GM12878 (cell line): ENCODE measurements at regions of chr1 and their contacts with region 1.

Region 1: DNA sequence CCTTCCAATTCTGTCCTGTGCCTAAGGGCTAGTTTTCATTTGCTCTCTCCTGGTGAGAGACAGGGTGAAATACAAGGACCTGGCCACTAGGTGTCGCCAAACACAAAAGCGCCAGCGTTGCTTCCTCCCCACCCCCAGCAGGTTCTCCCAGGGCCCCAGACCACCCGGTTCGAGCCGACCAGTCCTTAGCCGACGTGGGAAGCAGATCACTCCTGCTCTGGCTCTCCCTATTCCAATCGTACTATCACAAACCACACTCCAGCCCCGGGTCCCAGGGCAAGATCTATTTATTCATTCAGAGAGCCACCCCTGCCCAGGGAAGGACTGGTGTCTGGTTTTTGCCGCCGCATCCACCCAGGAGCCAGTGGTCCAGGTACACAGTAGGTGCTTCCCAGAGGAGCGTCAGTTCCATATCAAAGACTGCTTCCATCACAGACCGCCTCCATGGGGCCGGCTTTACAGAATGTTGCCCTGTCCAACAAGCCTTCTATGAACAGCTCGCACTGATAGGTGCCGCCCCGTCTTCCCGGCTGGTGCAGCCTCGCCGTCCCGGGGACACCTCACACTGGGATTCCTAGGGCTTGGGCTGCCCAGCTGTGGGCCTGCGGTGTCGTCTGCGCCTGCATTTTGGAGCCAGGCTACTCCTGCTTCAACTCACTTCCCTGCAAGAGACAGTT is 35.0 kb downstream of the CTNNBIP1 start:
- DNase-seq: peak; percentile 20
- ATAC-seq: peak; percentile 97
- H3K4me3 ChIP-seq: no peak overlapping the region
- H3K27ac ChIP-seq: no peak overlapping the region
- H3K4me1 ChIP-seq: 0 out of 2 replicates have a peak, but pooled peaks cover 4% of the 10 kb centered on the region
- H3K27me3 ChIP-seq: no peaks in the 10 kb centered on the region
- CTCF ChIP-seq: peak; percentile 92 to 98 (median 94); a peak in 5 of 6 replicates
- EP300 ChIP-seq: no peak
- POLR2A ChIP-seq: no peak
- RAD21 ChIP-seq: peak; percentile 95

Region 2: GRCh38 chr1:9910425-9911178 is 35.5 kb after region 1 on chr1:
- CTCF ChIA-PET with region 1: interaction called, 15 read pairs
- POLR2A ChIA-PET with region 1: no interaction called
- RAD21 ChIA-PET with region 1: interaction called, 4 read pairs
- SMC1A ChIA-PET with region 1: interaction called, 3 read pairs
- in situ Hi-C with region 1: no loop called
- intact Hi-C with region 1: no loop called
- DNase-seq: peak; percentile 93
- ATAC-seq: peak; percentile 98
- H3K4me3 ChIP-seq: peak overlapping the region; percentile 79
- H3K27ac ChIP-seq: peak overlapping the region; percentile 85
- H3K4me1 ChIP-seq: peaks cover 8% of the 10 kb centered on the region
- H3K27me3 ChIP-seq: no peaks in the 10 kb centered on the region
- CTCF ChIP-seq: no peak
- EP300 ChIP-seq: no peak
- POLR2A ChIP-seq: peak; percentile 76
- RAD21 ChIP-seq: no peak

Region 3: GRCh38 chr1:9942939-9943788 is 68.1 kb after region 1 on chr1 and contains the starts of genes LZIC and NMNAT1:
- CTCF ChIA-PET with region 1: interaction called, 43 read pairs
- POLR2A ChIA-PET with region 1: interaction called, 6 read pairs
- RAD21 ChIA-PET with region 1: interaction called, 13 read pairs
- SMC1A ChIA-PET with region 1: interaction called, 14 read pairs
- in situ Hi-C with region 1: no loop called
- intact Hi-C with region 1: loop called (anchors 1 kb)
- DNase-seq: peak; percentile 77
- ATAC-seq: peak; percentile 97
- H3K4me3 ChIP-seq: peak within 1 kb of the TSS; percentile 98
- H3K27ac ChIP-seq: peak within 1 kb of the TSS; percentile 93
- H3K4me1 ChIP-seq: peaks cover 6% of the 10 kb centered on the region; the same call in 1 of the 2 replicates
- H3K27me3 ChIP-seq: no peaks in the 10 kb centered on the region
- CTCF ChIP-seq: peak in 1 of 3 experiments; percentile 29; a peak in 1 of 6 replicates
- EP300 ChIP-seq: no peak
- POLR2A ChIP-seq: peak; percentile 95
- RAD21 ChIP-seq: peak; percentile 15; the same call in 1 of the 2 replicates
- polyA plus RNA-seq, gene LZIC: 21.8 to 24.9 TPM
- polyA plus RNA-seq, gene NMNAT1: 12.7 to 13.0 TPM

Region 4: GRCh38 chr1:10022656-10023055 is 147.6 kb after region 1 on chr1:
- CTCF ChIA-PET with region 1: interaction called, 4 read pairs
- POLR2A ChIA-PET with region 1: no interaction called
- RAD21 ChIA-PET with region 1: no interaction called
- SMC1A ChIA-PET with region 1: no interaction called
- in situ Hi-C with region 1: loop called (anchors 5 kb)
- intact Hi-C with region 1: no loop called
- DNase-seq: no peak
- ATAC-seq: no peak
- H3K4me3 ChIP-seq: no peak overlapping the region
- H3K27ac ChIP-seq: no peak overlapping the region
- H3K4me1 ChIP-seq: peaks cover 5% of the 10 kb centered on the region; the same call in 1 of the 2 replicates
- H3K27me3 ChIP-seq: no peaks in the 10 kb centered on the region
- CTCF ChIP-seq: no peak
- EP300 ChIP-seq: no peak
- POLR2A ChIP-seq: no peak
- RAD21 ChIP-seq: no peak

Region 5: DNA sequence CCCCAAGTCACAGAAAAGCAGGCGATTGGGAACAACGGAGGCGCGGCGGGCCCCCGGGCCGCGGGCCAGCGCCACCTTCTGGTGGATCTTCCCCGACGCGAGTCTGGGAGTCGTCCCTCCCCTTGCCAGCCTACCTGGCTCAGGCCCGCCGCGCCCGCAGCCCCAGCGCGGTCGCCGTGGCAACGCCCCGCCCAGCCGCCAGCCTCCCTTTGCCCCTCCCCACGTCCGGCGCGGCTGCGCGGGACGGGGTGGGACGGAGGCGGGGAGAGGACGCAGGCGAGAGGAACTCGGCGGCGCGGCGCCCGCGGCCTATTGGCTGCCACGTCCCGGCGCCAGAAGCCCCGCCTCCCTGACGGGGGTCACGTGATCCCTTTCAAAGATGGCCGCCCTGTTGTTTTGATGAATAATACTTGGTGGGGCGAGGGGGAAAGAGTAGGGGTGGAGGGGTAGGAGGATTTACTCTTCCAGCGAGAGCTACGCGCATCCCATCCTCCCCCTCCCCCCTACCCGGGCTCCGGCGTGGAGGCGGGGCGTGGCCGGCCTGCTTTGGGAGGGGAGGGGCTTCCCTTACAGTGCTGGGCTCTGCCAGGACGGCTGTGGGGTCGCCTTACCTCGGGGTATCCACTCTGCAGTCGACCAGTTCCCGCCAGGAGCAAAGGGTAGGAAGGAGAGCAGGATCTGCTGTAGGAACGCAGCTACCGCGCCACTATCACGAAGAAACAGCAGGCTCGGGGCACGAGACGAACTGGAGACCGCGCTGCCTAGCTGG is 157.7 kb after region 1 on chr1 and contains the start of gene UBE4B:
- CTCF ChIA-PET with region 1: interaction called, 4 read pairs
- POLR2A ChIA-PET with region 1: no interaction called
- RAD21 ChIA-PET with region 1: no interaction called
- SMC1A ChIA-PET with region 1: no interaction called
- in situ Hi-C with region 1: no loop called
- intact Hi-C with region 1: loop called (anchors 1 kb)
- DNase-seq: peak; percentile 83
- ATAC-seq: peak; percentile 98
- H3K4me3 ChIP-seq: peak within 1 kb of the TSS; percentile 99
- H3K27ac ChIP-seq: peak within 1 kb of the TSS; percentile 79
- H3K4me1 ChIP-seq: no peaks in the 10 kb centered on the region
- H3K27me3 ChIP-seq: no peaks in the 10 kb centered on the region
- CTCF ChIP-seq: peak; percentile 78 to 97 (median 90); a peak in 5 of 6 replicates
- EP300 ChIP-seq: peak in 1 of 2 experiments; percentile 23; a peak in 1 of 4 replicates
- POLR2A ChIP-seq: peak; percentile 62; the same call in 1 of the 2 replicates
- RAD21 ChIP-seq: peak; percentile 63
- polyA plus RNA-seq, gene UBE4B: 2.9 to 7.4 TPM

Region 6: DNA sequence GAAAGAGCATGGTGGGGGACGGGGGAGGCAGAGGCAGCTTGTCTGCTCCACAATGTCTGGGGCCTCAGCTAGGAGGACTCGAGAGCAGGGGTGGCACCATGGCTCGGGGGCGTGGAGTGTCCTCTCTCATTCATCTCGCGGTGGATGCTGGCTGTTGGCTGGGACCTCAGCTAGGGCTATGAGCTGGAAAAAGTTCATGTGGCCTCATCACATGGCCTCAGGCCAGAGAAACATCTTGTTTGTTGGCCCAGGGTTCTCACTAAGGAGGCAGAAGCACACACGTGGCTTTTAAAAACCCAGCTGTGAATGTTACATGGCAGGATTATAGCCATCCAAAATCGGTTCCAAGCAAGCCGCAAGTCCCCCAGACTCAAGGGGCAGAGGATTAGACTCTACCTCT is 548.9 kb after region 1 on chr1:
- CTCF ChIA-PET with region 1: interaction called, 3 read pairs
- POLR2A ChIA-PET with region 1: no interaction called
- RAD21 ChIA-PET with region 1: no interaction called
- SMC1A ChIA-PET with region 1: interaction called, 3 read pairs
- in situ Hi-C with region 1: loop called (anchors 5 kb)
- intact Hi-C with region 1: loop called (anchors 2 kb)
- DNase-seq: no peak
- ATAC-seq: no peak
- H3K4me3 ChIP-seq: no peak overlapping the region
- H3K27ac ChIP-seq: no peak overlapping the region
- H3K4me1 ChIP-seq: peaks cover 4% of the 10 kb centered on the region; the same call in 1 of the 2 replicates
- H3K27me3 ChIP-seq: no peaks in the 10 kb centered on the region
- CTCF ChIP-seq: no peak
- EP300 ChIP-seq: no peak
- POLR2A ChIP-seq: no peak
- RAD21 ChIP-seq: no peak

Region 7: DNA sequence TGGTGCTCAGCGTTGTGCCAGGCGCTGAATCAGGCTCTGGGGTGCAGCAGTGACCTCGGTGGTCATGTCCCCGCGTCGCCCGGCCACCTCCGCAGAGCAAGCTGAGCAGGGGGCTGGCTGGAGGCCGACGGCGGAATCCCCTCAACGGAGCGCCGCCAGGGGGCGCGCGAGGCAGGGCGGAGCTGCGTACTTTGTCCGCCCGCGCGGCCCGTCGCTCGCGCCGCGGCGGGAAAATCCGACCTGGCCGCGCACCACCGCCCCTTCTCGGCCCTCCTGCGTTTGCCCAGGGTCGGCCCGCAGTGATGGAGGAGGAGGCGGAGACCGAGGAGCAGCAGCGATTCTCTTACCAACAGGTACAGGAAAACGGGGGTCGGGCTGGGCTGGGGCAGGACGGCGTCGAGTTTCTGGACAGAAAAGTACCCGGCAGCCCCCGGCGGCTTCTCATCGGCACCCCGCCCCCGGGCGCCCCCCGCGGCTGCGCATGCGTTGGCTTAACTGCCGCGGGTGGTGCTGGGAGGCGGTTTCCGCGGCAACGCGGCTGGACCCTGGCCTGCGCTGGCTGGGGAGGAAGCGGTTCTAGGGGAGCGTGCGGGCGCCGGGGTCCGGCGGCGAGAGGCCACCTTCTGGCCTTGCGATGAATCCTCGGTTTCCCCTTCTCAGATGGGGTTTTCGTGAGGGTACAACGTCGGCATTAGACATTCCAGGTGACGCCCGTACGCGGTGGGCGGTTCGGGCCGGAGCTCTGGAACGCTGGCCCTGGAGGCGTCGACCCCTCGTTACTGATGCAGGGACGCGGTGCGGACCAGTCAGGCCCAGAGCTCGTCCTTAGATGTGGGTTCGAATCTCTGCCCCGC is 555.3 kb after region 1 on chr1 and contains the start of gene CENPS:
- CTCF ChIA-PET with region 1: interaction called, 3 read pairs
- POLR2A ChIA-PET with region 1: no interaction called
- RAD21 ChIA-PET with region 1: no interaction called
- SMC1A ChIA-PET with region 1: interaction called, 3 read pairs
- in situ Hi-C with region 1: no loop called
- intact Hi-C with region 1: loop called (anchors 2 kb)
- DNase-seq: peak; percentile 51
- ATAC-seq: peak; percentile 89
- H3K4me3 ChIP-seq: peak within 1 kb of the TSS; percentile 93
- H3K27ac ChIP-seq: peak within 1 kb of the TSS; percentile 80
- H3K4me1 ChIP-seq: peaks cover 24% of the 10 kb centered on the region
- H3K27me3 ChIP-seq: no peaks in the 10 kb centered on the region
- CTCF ChIP-seq: peak; percentile 87 to 98 (median 93); a peak in 5 of 6 replicates
- EP300 ChIP-seq: no peak
- POLR2A ChIP-seq: peak; percentile 74
- RAD21 ChIP-seq: peak; percentile 51
- polyA plus RNA-seq, gene CENPS: 10.9 to 17.5 TPM